WTC11 (cell line): ENCODE measurements at regions of chr7 and their contacts with region 1.

Region 1: GRCh38 chr7:95545078-95545498 is 51.2 kb downstream of the PDK4 start:
- DNase-seq: no peak
- ATAC-seq: peak; percentile 92
- H3K4me3 Mint-ChIP-seq: no peak overlapping the region
- H3K27ac Mint-ChIP-seq: no peak overlapping the region
- H3K4me1 Mint-ChIP-seq: peaks cover 3% of the 10 kb centered on the region
- H3K27me3 Mint-ChIP-seq: no peaks in the 10 kb centered on the region
- CTCF ChIP-seq: no peak

Region 2: GRCh38 chr7:95534796-95535195 is 10.3 kb before region 1 on chr7:
- CTCF ChIA-PET with region 1: interaction called, 10 read pairs
- POLR2A ChIA-PET with region 1: no interaction called
- DNase-seq: no peak
- ATAC-seq: no peak
- H3K4me3 Mint-ChIP-seq: no peak overlapping the region
- H3K27ac Mint-ChIP-seq: no peak overlapping the region
- H3K4me1 Mint-ChIP-seq: no peaks in the 10 kb centered on the region
- H3K27me3 Mint-ChIP-seq: peaks cover 6% of the 10 kb centered on the region; the same call in 1 of the 2 replicates
- CTCF ChIP-seq: no peak

Region 3: DNA sequence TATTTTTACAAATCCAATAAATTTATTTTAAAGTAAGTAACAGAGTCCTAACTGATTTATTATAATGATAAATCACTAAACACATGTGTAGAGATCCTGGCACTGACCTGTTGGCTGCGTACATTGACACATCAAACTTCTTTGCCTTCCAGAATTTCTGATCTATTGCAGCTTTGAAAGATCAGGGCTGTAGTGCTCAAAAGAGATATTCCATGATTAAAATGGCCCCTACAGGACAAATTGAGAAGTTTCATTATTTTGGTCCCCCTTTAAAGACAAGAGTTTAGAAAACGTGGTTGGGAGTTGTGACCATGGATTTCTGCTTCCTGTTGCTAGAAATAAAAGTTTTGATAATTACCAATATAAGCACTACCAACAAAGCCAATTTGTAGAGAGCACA is 138.9 kb after region 1 on chr7:
- CTCF ChIA-PET with region 1: interaction called, 68 read pairs
- POLR2A ChIA-PET with region 1: no interaction called
- DNase-seq: no peak
- ATAC-seq: peak; percentile 61
- H3K4me3 Mint-ChIP-seq: no peak overlapping the region
- H3K27ac Mint-ChIP-seq: no peak overlapping the region
- H3K4me1 Mint-ChIP-seq: 0 out of 2 replicates have a peak, but pooled peaks cover 3% of the 10 kb centered on the region
- H3K27me3 Mint-ChIP-seq: no peaks in the 10 kb centered on the region
- CTCF ChIP-seq: no peak

Region 4: GRCh38 chr7:95690367-95690947 is 145.4 kb after region 1 on chr7:
- CTCF ChIA-PET with region 1: interaction called, 68 read pairs
- POLR2A ChIA-PET with region 1: no interaction called
- DNase-seq: no peak
- ATAC-seq: peak; percentile 64
- H3K4me3 Mint-ChIP-seq: peak overlapping the region; percentile 29
- H3K27ac Mint-ChIP-seq: no peak overlapping the region
- H3K4me1 Mint-ChIP-seq: peaks cover 6% of the 10 kb centered on the region; the same call in 1 of the 2 replicates
- H3K27me3 Mint-ChIP-seq: no peaks in the 10 kb centered on the region
- CTCF ChIP-seq: peak; percentile 60